Esophagus squamous epithelium (tissue), 5 donors: ENCODE measurements at regions of chr3 and their contacts with region 1.

Region 1: GRCh38 chr3:94062431-94063404 is at the starts of genes DHFR2 and NSUN3:
- DNase-seq: peak; percentile 75
- H3K4me3 ChIP-seq: peak within 1 kb of the TSS; percentile 63 to 77 (median 71)
- H3K27ac ChIP-seq: peak within 1 kb of the TSS; percentile 90 to 96 (median 93)
- H3K4me1 ChIP-seq: peaks cover 0 to 35% (median 21%) of the 10 kb centered on the region in 3 donors
- H3K27me3 ChIP-seq: no peaks in the 10 kb centered on the region
- CTCF ChIP-seq: peak in 1 of 6 experiments; percentile 3
- POLR2A ChIP-seq: peak in 3 of 4 donors; percentile 21 to 40 (median 39)
- total RNA-seq, gene DHFR2: 1.4 to 4.4 (median 3.8) TPM
- total RNA-seq, gene NSUN3: 3.6 to 13.2 (median 6.7) TPM

Region 2: DNA sequence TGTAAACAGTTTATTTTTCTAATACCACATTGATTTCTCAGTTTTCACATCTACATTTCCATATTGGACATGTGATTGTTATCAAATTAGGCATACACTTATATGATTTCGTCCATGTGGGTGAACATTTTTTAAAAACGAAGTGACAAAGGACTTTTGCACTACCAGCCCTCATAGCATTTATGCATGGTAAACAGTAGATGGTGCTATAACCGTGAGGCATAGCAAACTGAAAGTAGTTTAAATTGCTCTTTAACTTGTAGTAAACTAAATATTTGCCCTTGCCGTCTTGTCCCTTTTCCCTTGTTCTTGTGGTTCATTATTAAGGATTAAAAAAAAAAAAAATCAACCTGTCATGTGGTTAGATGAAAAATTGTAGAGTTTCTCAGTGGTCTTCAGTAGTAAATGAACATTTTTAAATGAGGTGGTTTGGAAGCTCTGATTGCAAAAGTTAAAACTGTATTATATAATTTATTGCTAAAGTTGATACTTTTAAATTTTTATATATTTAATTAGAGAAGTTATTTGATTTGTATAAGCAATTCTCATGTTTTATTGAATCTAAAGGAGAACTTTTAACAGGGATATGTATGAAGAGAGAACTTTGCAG is 58.3 kb before region 1 on chr3:
- intact Hi-C with region 1: loop called (anchors 10 kb)
- DNase-seq: no peak
- H3K4me3 ChIP-seq: peak overlapping the region in 3 of 4 donors; percentile 20 to 46 (median 27)
- H3K27ac ChIP-seq: peak overlapping the region in 1 of 4 donors; percentile 34
- H3K4me1 ChIP-seq: peaks cover 0 to 17% (median 0%) of the 10 kb centered on the region in 3 donors
- H3K27me3 ChIP-seq: no peaks in the 10 kb centered on the region
- CTCF ChIP-seq: peak in 5 of 6 experiments; percentile 57 to 77 (median 69)
- POLR2A ChIP-seq: no peak

Region 3: GRCh38 chr3:94173676-94174434 is 111.1 kb after region 1 on chr3:
- intact Hi-C with region 1: no loop called
- DNase-seq: no peak
- H3K4me3 ChIP-seq: no peak overlapping the region
- H3K27ac ChIP-seq: no peak overlapping the region
- H3K4me1 ChIP-seq: no peaks in the 10 kb centered on the region
- H3K27me3 ChIP-seq: no peaks in the 10 kb centered on the region
- CTCF ChIP-seq: no peak
- POLR2A ChIP-seq: no peak